B cell (primary cell): ENCODE measurements at regions of chr7 and their contacts with region 1.

Region 1: DNA sequence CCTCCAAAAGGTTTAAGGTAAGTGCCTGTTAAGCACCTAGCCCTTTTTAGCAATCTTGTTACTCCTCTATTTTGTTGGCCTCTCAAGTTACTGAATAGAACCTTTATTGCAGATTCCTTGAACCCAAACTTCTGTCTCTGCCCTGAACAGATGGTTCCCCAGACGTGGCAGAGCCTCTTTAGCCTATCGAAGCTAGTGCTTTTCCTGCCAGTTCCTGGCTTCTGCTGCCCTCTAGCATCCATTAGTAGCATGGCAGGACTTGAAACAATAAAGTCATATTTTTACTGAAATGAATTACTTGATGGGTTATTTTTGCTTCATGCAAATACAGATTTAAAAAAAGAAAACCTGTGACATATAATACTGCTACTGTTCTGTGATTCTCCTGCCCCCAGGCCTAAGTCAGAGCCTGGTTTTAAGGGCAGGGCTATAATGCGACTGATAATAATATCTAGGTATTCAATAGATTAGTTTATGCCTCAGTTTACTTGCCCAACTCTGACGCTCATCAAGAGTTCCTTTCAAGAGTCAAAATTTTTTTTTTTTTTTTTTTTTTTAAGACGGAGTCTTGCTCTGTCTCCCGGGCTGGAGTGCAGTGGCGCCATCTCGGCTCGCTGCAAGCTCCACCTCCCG is 84.3 kb upstream of the PHF14 start:
- DNase-seq: peak; percentile 58
- ATAC-seq: peak; percentile 66
- H3K4me3 ChIP-seq: no peak overlapping the region
- H3K4me3 Mint-ChIP-seq: peak overlapping the region; percentile 63
- H3K27ac ChIP-seq: no peak overlapping the region
- H3K27ac Mint-ChIP-seq: no peak overlapping the region
- H3K4me1 ChIP-seq: peaks cover 10 to 13% of the 10 kb centered on the region in 2 donors
- H3K4me1 Mint-ChIP-seq: peaks cover 13% of the 10 kb centered on the region
- H3K27me3 ChIP-seq: no peaks in the 10 kb centered on the region
- H3K27me3 Mint-ChIP-seq: peaks cover 3% of the 10 kb centered on the region
- CTCF ChIP-seq: peak; percentile 77

Region 2: DNA sequence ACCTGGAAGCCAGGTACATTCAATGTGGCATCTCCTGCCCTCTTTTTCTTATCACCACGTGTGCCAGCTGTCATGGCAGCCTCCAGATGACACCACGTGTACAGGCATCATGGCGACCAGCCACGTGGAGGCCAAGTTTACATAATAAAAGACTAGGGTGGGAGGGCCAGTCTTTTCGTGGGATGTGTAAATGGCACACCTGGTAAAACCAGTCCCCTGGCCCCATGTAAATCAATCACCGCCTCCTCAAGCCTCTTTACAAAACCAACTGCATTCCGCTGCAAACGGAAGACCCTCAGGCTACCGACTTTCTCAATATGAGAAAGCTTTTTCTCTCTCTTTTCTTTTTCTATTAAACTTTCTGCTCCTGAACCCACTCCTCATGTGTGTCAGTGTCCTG is 19.2 kb after region 1 on chr7:
- CTCF ChIA-PET with region 1: no interaction called
- POLR2A ChIA-PET with region 1: no interaction called
- intact Hi-C with region 1: no loop called
- DNase-seq: no peak
- ATAC-seq: no peak
- H3K4me3 ChIP-seq: no peak overlapping the region
- H3K4me3 Mint-ChIP-seq: no peak overlapping the region
- H3K27ac ChIP-seq: no peak overlapping the region
- H3K27ac Mint-ChIP-seq: no peak overlapping the region
- H3K4me1 ChIP-seq: no peaks in the 10 kb centered on the region
- H3K4me1 Mint-ChIP-seq: no peaks in the 10 kb centered on the region
- H3K27me3 ChIP-seq: no peaks in the 10 kb centered on the region
- H3K27me3 Mint-ChIP-seq: peaks cover 8% of the 10 kb centered on the region
- CTCF ChIP-seq: no peak

Region 3: DNA sequence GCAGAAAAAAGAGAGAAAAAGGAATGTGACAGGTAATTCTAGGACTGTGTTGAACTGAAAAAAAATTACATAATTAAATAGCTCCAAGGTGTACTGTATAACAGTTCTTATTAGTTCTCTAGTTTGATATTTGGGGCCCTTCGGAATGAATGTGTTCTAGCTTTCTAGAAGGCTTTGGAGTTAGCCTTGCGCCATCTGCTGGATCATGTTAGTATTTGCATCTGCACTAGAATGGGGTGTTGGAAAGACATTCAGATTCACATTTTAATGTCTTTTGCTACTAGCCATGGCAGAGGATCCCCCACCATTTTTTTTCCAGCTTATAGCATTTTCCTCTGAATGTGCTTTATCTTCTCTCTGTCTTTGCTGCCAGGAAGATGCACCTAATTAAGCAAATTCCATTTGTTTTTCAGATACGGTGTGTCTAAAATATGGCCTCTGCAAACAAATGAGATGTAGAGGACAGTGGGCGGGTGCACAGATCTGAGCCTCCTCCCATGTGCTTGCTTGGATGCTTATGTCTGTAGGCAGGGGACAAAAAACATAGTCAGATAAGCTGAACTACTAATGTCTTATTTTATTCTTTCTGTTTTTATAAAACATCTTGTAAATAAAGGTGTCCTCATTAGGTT is 322.8 kb after region 1 on chr7:
- CTCF ChIA-PET with region 1: interaction called, 6 read pairs
- POLR2A ChIA-PET with region 1: no interaction called
- intact Hi-C with region 1: loop called (anchors 1 kb)
- DNase-seq: peak; percentile 61
- ATAC-seq: peak; percentile 62
- H3K4me3 ChIP-seq: no peak overlapping the region
- H3K4me3 Mint-ChIP-seq: no peak overlapping the region
- H3K27ac ChIP-seq: no peak overlapping the region
- H3K27ac Mint-ChIP-seq: no peak overlapping the region
- H3K4me1 ChIP-seq: no peaks in the 10 kb centered on the region
- H3K4me1 Mint-ChIP-seq: peaks cover 2% of the 10 kb centered on the region
- H3K27me3 ChIP-seq: no peaks in the 10 kb centered on the region
- H3K27me3 Mint-ChIP-seq: no peaks in the 10 kb centered on the region
- CTCF ChIP-seq: peak; percentile 96

Region 4: DNA sequence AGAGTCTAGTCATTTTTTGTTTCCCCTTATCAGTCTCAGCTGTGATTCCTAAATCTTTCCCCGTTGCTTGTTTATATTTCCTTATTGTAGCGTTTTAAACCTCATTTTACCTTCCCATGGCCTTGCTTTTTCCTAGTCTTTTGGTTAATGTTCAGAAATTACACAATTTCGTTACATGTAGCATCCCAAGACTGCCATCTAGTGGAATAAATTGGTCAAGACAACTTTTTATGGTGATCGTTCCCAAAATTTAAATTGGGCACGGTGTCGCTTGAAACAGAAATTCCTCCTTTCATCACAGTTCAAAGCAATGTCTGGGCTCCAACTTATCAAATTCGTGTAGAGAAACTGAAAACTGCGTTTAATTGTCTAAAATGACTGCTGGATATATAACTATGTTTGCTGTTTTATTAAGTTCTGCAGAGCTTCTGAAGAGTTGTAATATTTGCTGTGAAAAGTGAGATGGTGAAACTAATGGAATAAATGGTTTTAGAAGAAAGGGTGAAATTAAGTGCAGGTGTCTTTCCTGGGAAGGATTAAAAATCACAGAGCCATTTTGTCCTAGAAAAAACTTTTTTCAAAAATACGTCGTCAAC is 454.5 kb after region 1 on chr7:
- CTCF ChIA-PET with region 1: no interaction called
- POLR2A ChIA-PET with region 1: no interaction called
- intact Hi-C with region 1: loop called (anchors 10 kb)
- DNase-seq: peak; percentile 51
- ATAC-seq: peak; percentile 21
- H3K4me3 ChIP-seq: no peak overlapping the region
- H3K4me3 Mint-ChIP-seq: no peak overlapping the region
- H3K27ac ChIP-seq: no peak overlapping the region
- H3K27ac Mint-ChIP-seq: no peak overlapping the region
- H3K4me1 ChIP-seq: no peaks in the 10 kb centered on the region
- H3K4me1 Mint-ChIP-seq: peaks cover 2% of the 10 kb centered on the region
- H3K27me3 ChIP-seq: no peaks in the 10 kb centered on the region
- H3K27me3 Mint-ChIP-seq: peaks cover 4% of the 10 kb centered on the region
- CTCF ChIP-seq: peak; percentile 96